IMR-90 (cell line): ENCODE measurements at regions of chr16 and their contacts with region 1.

Region 1: GRCh38 chr16:70563636-70564035 is 40.0 kb downstream of the SF3B3 start:
- DNase-seq: no peak
- ATAC-seq: no peak
- H3K4me3 ChIP-seq: no peak overlapping the region
- H3K27ac ChIP-seq: no peak overlapping the region
- H3K4me1 ChIP-seq: no peaks in the 10 kb centered on the region; the same call in 1 of the 2 replicates
- H3K27me3 ChIP-seq: no peaks in the 10 kb centered on the region
- CTCF ChIP-seq: no peak
- POLR2A ChIP-seq: no peak
- RAD21 ChIP-seq: no peak

Region 2: DNA sequence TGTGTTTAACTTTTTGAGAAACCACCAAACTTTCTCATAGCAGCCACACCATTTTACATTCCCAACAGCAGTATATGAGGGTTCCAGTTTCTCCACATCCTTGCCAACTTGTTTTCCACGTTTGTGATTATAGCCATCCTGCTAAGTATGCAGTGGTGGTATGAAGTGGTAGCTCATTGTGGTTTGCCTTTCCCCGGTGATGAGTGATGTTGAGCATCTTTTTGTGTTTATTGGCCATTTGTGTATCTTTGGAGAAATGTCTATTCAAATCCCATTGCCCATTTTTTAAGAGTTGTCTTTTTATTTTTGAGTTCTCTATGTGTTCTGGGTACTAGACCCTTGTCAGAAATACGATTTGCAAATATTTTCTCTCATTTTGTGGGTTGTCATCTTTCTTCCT is 22.6 kb before region 1 on chr16:
- CTCF ChIA-PET with region 1: no interaction called
- POLR2A ChIA-PET with region 1: no interaction called
- dilution Hi-C with region 1: no loop called
- in situ Hi-C with region 1: no loop called
- intact Hi-C with region 1: loop called (anchors 1 kb)
- DNase-seq: no peak
- ATAC-seq: 0 out of 2 replicates have a peak, but pooled peaks have one; percentile 24
- H3K4me3 ChIP-seq: no peak overlapping the region
- H3K27ac ChIP-seq: no peak overlapping the region
- H3K4me1 ChIP-seq: no peaks in the 10 kb centered on the region
- H3K27me3 ChIP-seq: no peaks in the 10 kb centered on the region
- CTCF ChIP-seq: no peak
- POLR2A ChIP-seq: no peak
- RAD21 ChIP-seq: no peak